Mammary epithelial cell (primary cell): ENCODE measurements at regions of chr22 and their contacts with region 1.

Region 1: DNA sequence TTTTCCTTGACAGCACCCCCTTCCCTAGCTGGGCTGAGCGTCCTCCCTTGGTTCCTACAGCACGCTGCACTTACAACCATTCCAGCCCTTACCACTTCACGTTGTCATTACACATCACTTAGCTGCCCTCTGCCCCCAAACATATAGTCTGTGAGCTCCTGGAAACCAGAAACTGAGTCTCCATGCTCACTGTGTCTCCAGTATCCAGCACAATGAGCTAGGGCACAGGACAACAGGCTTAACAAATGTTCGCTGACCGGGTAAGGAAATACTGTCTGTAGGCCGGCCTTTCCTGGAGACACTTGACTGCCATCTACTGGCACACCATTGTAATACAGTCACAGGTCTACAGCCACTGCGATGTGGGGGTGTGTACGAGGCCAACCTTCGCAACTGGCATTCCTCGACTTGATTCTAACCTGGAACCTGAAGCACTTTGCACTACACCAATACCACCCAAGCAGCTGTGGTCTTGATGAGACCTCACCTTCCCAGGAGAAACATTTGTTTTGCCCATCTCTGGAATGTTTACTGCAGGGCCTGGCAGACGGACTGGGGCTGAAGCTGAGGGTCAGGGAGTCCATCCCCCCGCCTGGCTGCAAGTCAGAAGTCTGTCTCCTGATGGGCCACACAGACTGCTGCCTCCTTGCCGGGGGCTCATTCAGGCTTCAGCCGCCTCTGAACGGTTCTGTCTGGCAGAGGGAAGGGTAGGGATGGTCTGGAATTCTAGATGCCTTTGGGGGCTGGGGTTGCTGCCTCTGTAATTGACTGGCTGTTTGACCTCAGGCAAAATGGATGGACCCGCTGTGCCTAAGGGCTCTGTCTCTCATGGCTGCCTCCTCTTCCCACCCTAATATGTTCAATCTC is 72.0 kb downstream of the SYN3 start:
- DNase-seq: peak; percentile 75
- H3K4me3 ChIP-seq: no peak overlapping the region
- H3K27ac ChIP-seq: peak overlapping the region; percentile 80
- H3K4me1 ChIP-seq: peaks cover 34% of the 10 kb centered on the region
- H3K27me3 ChIP-seq: no peaks in the 10 kb centered on the region
- CTCF ChIP-seq: peak; percentile 86 to 92

Region 2: DNA sequence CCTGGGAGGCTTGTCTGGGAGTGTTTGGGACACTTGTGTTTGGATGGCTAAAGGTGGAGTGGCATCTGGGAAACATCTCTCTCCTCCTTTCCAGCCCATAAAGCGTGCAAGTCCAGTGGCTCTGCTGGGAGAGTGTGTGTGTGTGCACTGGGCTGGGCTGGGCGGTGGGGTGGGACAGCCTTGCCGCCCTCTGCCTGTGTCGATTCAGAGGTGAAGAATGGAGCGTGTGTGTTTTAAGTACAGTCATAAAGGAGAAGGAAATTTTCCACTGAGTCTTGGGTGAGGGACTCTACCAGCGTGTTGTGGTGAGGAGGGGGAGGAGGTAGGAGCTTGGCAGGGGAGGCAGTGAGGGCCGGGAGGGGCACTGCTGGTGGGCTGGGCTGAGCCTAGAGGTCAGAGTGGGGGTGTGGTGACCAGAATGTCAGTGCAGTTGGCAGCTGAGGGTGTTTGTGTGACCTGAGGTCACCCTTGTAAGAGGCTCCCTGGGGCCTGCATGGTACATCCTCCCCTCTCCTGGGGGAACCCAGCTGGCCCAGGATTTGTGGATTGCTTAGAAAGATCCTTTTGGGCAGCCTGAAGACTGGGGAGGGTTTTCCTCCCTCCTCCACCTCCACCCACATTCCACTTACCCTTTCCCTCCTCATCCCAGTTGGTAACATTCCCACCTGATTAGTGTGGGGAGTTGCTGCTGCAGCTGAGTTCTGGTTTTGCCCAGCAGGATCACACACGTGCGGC is 182.9 kb before region 1 on chr22:
- CTCF ChIA-PET with region 1: no interaction called
- dilution Hi-C with region 1: no loop called
- in situ Hi-C with region 1: loop called in 1 of 2 experiments (anchors 5 kb)
- intact Hi-C with region 1: loop called (anchors 1 kb)
- DNase-seq: peak; percentile 68
- H3K4me3 ChIP-seq: peak overlapping the region; percentile 61 to 89 (median 68)
- H3K27ac ChIP-seq: peak overlapping the region; percentile 41
- H3K4me1 ChIP-seq: peaks cover 21% of the 10 kb centered on the region
- H3K27me3 ChIP-seq: no peaks in the 10 kb centered on the region
- CTCF ChIP-seq: no peak

Region 3: GRCh38 chr22:32846901-32847491 is 139.1 kb before region 1 on chr22:
- CTCF ChIA-PET with region 1: no interaction called
- dilution Hi-C with region 1: no loop called
- in situ Hi-C with region 1: no loop called
- intact Hi-C with region 1: loop called (anchors 2 kb)
- DNase-seq: peak; percentile 84
- H3K4me3 ChIP-seq: no peak overlapping the region
- H3K27ac ChIP-seq: no peak overlapping the region
- H3K4me1 ChIP-seq: peaks cover 36% of the 10 kb centered on the region
- H3K27me3 ChIP-seq: no peaks in the 10 kb centered on the region
- CTCF ChIP-seq: no peak

Region 4: DNA sequence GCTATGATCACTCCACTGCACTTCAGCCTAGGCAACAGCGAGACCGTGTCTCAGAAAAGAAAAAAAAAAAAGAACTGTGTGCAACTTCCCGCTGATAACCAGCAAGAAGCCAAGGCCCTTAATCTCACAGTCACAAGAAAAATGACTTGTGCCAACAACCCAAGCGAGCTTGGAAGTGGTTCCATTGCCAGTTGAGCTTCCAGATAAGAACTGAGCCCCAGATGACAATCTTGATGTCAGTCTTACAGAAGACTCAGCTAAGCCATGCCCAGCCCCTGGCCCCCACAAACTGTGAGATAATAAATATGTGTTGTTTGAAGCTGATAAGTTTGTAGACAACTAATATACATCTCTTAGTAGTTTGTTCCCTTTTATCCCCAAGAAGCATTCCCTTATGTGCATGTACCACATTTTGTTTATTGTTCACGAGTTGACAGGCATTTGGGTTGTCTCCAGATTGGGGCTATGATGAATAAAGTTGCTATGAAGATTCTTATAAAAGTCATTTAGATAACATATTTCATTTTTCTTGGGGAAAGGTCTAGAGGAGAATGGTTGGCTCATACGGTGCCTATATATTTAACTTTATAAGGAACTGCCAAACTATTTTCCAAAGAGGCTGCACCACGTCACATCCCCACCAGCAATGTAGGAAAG is 98.7 kb before region 1 on chr22:
- CTCF ChIA-PET with region 1: no interaction called
- dilution Hi-C with region 1: no loop called
- in situ Hi-C with region 1: no loop called
- intact Hi-C with region 1: no loop called
- DNase-seq: no peak
- H3K4me3 ChIP-seq: no peak overlapping the region
- H3K27ac ChIP-seq: no peak overlapping the region
- H3K4me1 ChIP-seq: no peaks in the 10 kb centered on the region
- H3K27me3 ChIP-seq: no peaks in the 10 kb centered on the region
- CTCF ChIP-seq: no peak

Region 5: DNA sequence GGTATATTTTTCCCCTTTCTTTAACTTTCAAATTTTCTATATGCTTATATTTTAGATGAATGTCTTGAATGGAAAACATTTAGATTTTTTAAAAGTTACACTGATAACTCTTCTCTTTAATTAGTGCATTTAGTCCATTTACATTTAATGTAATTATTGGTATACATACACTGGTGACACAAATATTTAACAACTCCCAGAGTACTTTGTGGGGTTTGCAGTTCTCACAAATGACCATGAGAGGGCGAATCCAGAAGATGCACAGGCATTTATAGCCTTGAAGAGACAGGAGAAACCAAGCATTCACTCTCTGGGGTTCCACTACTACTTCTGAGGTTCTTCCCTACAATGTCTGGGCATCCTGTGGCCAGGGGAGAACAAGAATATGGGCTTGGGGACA is 59.5 kb before region 1 on chr22:
- CTCF ChIA-PET with region 1: no interaction called
- dilution Hi-C with region 1: no loop called
- in situ Hi-C with region 1: no loop called
- intact Hi-C with region 1: loop called (anchors 1 kb)
- DNase-seq: peak; percentile 52
- H3K4me3 ChIP-seq: no peak overlapping the region
- H3K27ac ChIP-seq: no peak overlapping the region
- H3K4me1 ChIP-seq: no peaks in the 10 kb centered on the region
- H3K27me3 ChIP-seq: no peaks in the 10 kb centered on the region
- CTCF ChIP-seq: peak; percentile 69 to 85

Region 6: DNA sequence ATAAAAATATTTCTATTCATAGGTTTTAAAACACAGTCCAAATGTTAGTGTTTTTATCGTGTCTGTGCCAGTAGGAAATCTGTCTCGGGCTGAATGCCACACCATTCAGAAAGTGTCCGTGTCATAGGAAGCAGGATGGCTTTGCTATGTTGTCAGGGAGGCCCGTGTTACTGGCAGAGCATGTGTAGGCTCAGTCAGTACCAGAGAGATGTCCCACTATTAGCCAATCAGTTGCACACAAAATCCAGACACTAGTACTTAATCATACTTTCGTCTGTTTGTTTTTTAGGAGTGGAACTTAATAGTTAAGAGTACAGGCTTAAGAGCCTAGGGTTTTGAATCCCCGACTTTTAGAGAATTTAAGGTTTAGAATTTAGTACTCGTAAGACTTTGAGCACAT is 102.3 kb after region 1 on chr22:
- CTCF ChIA-PET with region 1: no interaction called
- dilution Hi-C with region 1: no loop called
- in situ Hi-C with region 1: no loop called
- intact Hi-C with region 1: no loop called
- DNase-seq: no peak
- H3K4me3 ChIP-seq: no peak overlapping the region
- H3K27ac ChIP-seq: no peak overlapping the region
- H3K4me1 ChIP-seq: no peaks in the 10 kb centered on the region
- H3K27me3 ChIP-seq: no peaks in the 10 kb centered on the region
- CTCF ChIP-seq: no peak

Region 7: DNA sequence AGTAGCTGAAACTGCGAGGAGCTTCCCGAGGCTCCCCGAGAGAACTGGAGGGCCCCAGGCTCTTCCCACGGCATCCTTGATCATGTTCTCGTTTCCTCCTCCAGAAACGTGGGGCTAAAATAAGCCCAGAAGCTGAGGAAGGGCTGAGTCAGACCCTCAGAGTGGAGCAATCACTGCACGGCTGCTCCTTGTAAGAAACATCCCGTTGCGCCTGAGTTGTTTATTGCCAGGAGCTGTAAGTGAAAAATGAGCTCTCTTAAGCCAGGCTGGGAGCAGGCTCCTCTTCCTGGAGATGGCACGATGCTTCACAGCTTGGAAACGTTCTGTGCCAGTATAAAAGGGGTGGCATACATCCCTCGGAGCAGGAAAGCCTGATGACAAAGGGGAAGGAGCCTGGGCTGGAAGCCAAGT is 119.4 kb after region 1 on chr22:
- CTCF ChIA-PET with region 1: no interaction called
- dilution Hi-C with region 1: no loop called
- in situ Hi-C with region 1: no loop called
- intact Hi-C with region 1: no loop called
- DNase-seq: peak; percentile 75
- H3K4me3 ChIP-seq: no peak overlapping the region
- H3K27ac ChIP-seq: no peak overlapping the region
- H3K4me1 ChIP-seq: peaks cover 13% of the 10 kb centered on the region
- H3K27me3 ChIP-seq: no peaks in the 10 kb centered on the region
- CTCF ChIP-seq: no peak